ENCODE measurements at regions of chr4 and their contacts with region 1.

Region 1: DNA sequence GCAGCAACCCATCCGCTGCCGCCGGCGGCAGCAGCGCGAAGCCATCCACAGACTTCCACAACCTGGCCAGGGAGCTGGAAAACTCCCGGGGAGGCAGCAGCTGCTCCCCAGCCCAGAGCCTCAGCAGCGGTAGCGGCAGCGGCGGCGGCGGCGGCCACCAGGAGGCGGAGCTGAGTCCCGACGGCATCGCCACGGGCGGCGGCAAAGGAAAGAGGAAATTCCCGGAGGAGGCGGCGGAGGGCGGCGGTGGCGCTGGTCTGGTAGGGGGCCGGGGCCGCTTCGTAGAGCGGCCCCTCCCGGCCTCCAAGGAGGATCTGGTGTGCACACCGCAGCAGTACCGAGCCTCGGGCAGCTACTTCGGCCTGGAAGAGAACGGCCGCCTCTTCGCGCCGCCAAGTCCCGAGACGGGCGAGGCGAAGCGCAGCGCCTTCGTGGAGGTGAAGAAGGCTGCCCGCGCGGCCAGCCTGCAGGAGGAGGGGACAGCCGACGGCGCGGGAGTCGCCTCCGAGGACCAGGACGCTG is 4.9 kb downstream of the PRDM8 start:
- DNase-seq: peak; percentile 89
- H3K4me3 ChIP-seq: peak overlapping the region; percentile 61 to 90 (median 80)
- H3K27ac ChIP-seq: peak overlapping the region; percentile 87 to 95 (median 90)
- H3K4me1 ChIP-seq: peaks cover 0 to 25% (median 16%) of the 10 kb centered on the region in 4 donors
- H3K27me3 ChIP-seq: peaks cover 62% of the 10 kb centered on the region
- CTCF ChIP-seq: peak; percentile 84 to 90 (median 89)
- EP300 ChIP-seq: no peak
- POLR2A ChIP-seq: no peak

Region 2: DNA sequence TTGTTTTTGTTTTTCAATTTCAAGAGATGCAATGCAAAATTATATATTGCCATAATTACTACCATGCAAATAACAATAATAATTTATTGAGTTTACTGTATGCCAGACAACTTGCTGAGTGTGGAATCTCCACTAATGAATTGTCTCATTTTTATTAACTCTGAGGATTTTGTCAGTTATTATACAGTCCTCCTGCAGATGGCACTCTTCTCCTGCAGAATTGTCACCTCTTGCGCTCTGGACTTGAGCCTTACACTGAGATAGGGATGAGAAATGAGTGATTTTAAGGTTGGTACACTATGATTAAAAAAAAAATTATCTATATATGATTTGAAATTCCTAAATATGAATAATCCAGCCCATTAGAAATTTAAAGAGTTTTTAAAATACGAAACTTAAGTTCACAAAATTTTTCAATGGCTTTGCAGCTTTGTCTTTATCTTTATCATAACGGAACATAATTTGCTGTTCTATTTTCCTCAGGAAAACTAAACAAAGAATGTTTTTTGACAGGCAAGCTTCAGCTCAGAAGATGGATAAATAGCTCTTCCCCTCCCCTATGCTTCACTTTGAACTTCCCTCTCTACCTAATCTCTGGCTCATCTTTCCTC is 1250.3 kb before region 1 on chr4:
- in situ Hi-C with region 1: loop called in 2 of 4 experiments (anchors 25 kb)
- intact Hi-C with region 1: no loop called
- DNase-seq: no peak
- H3K4me3 ChIP-seq: no peak overlapping the region
- H3K27ac ChIP-seq: no peak overlapping the region
- H3K4me1 ChIP-seq: no peaks in the 10 kb centered on the region
- H3K27me3 ChIP-seq: no peaks in the 10 kb centered on the region
- CTCF ChIP-seq: peak; percentile 65 to 78 (median 69)
- EP300 ChIP-seq: no peak
- POLR2A ChIP-seq: no peak

Region 3: GRCh38 chr4:79917246-79917645 is 285.0 kb before region 1 on chr4:
- in situ Hi-C with region 1: loop called in 1 of 4 experiments (anchors 25 kb)
- intact Hi-C with region 1: no loop called
- DNase-seq: peak; percentile 22
- H3K4me3 ChIP-seq: no peak overlapping the region
- H3K27ac ChIP-seq: no peak overlapping the region
- H3K4me1 ChIP-seq: peaks cover 0 to 5% (median 2%) of the 10 kb centered on the region in 4 donors
- H3K27me3 ChIP-seq: no peaks in the 10 kb centered on the region
- CTCF ChIP-seq: peak; percentile 30 to 52 (median 40)
- EP300 ChIP-seq: no peak
- POLR2A ChIP-seq: no peak

Region 4: GRCh38 chr4:80138551-80139538 is 63.4 kb before region 1 on chr4:
- in situ Hi-C with region 1: no loop called
- intact Hi-C with region 1: no loop called
- DNase-seq: peak; percentile 8
- H3K4me3 ChIP-seq: no peak overlapping the region
- H3K27ac ChIP-seq: peak overlapping the region in 1 of 4 donors; percentile 9
- H3K4me1 ChIP-seq: peaks cover 0 to 28% (median 2%) of the 10 kb centered on the region in 4 donors
- H3K27me3 ChIP-seq: no peaks in the 10 kb centered on the region
- CTCF ChIP-seq: no peak
- EP300 ChIP-seq: no peak
- POLR2A ChIP-seq: no peak

Region 5: DNA sequence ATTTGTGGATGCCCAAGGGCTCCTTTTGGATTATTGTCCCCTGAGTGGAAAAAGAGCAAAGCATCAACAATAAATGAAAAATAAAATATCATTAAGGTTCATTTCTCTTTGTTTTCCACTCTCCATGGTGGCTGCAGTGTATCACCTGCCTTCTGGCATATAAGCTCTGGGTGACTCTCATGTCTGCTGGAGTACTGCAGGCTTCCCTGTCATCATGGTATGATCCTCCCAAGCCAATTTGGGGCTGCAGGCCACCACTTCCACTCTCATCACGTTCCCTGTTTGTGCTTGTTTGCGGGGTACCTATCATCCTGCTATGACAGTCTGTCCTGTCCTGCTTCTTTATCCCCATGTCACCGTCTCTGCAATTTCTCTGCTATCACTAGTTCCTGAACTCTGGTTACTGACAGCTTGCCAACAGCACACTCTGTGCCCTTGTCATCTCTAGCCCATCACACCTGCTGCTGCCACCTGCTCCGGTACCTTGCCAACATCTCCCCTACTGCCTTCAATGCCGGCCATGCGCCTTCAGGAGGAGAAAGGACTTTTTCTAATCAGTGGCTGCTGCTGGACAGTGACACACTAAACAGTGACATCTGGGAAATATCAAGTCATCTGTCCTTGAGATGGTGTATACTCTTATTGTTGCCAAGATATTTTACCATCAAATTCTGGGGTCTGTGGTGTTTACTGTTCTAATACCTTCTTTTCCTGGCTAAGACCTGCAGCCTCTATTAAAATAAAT is 41.2 kb after region 1 on chr4:
- in situ Hi-C with region 1: no loop called
- intact Hi-C with region 1: loop called (anchors 2 kb)
- DNase-seq: no peak
- H3K4me3 ChIP-seq: no peak overlapping the region
- H3K27ac ChIP-seq: no peak overlapping the region
- H3K4me1 ChIP-seq: no peaks in the 10 kb centered on the region
- H3K27me3 ChIP-seq: peaks cover 15% of the 10 kb centered on the region
- CTCF ChIP-seq: no peak
- EP300 ChIP-seq: no peak
- POLR2A ChIP-seq: no peak

Measured in transverse colon (tissue), 4 donors.